Right ventricle myocardium inferior (tissue), 1 donor: ENCODE measurements at regions of chr3 and their contacts with region 1.

Region 1: GRCh38 chr3:32045091-32045964 is 61.1 kb upstream of the GPD1L start:
- DNase-seq: no peak
- ATAC-seq: peak; percentile 89

Region 2: GRCh38 chr3:31908391-31909097 is 136.8 kb before region 1 on chr3:
- intact Hi-C with region 1: no loop called
- DNase-seq: no peak
- ATAC-seq: no peak

Region 3: GRCh38 chr3:32106280-32106928 is 61.1 kb after region 1 on chr3 and contains the start of gene GPD1L:
- intact Hi-C with region 1: loop called (anchors 1 kb)
- DNase-seq: peak; percentile 98
- ATAC-seq: peak; percentile 96
- total RNA-seq, gene GPD1L: 223 TPM

Region 4: DNA sequence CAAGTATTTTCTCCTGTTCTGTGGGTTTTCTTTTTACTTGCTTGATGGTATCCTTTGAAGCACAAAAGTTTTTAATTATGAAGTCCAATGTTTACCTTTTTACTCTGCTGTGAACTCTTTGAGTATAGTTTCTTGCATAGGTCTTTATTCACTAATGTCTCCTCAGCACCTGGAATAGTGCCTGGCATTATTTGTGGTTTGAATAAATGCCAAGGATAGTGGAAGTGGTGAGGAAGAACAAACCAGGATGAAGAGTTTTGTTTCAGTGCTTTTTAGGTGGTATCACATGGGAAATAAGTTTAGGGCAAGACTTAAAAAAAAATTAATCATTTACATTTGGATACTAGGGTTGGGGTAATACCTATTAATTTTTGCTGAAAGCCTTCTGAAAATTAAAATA is 86.8 kb after region 1 on chr3:
- intact Hi-C with region 1: loop called (anchors 5 kb)
- DNase-seq: no peak
- ATAC-seq: no peak

Region 5: DNA sequence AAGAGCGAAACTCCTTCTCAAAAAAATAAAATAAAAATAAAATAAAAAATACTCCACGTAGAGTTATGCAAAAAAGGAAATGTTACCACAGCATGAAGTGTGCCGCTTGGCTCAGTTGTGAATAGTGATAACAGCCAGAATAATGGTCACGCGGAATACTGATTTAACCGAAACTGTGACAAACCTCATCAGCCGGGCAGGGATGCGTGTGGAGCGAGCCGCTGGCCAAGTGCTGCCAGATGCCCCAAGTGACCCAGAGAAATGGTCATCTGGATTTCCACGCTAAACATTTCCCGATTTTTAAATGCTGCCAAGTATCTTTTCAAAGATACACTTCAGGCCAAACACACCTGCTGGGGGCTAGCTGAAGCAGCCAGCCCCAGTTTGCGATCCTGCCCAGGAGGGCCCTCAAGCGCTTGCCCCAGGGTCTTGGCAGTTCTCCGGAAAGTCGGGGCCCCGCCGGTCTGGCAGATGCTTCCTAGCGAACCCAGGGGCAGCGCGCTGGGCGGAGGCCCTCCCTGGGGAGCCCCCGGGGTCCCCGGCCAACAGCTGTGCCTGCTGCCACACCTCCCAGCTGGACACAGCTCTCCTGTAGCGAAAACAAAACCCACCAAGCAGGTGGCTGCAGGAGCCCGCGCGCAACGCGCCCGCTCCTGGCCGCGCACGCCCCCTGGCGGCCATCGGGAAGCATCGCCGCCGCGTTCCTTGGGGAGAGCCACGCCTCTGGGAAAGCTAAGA is 422.2 kb after region 1 on chr3:
- intact Hi-C with region 1: no loop called
- DNase-seq: peak; percentile 91
- ATAC-seq: peak; percentile 94

Region 6: GRCh38 chr3:32551087-32551486 is 505.8 kb after region 1 on chr3:
- intact Hi-C with region 1: no loop called
- DNase-seq: no peak
- ATAC-seq: no peak